A673 (cell line): ENCODE measurements at regions of chr1 and their contacts with region 1.

Region 1: DNA sequence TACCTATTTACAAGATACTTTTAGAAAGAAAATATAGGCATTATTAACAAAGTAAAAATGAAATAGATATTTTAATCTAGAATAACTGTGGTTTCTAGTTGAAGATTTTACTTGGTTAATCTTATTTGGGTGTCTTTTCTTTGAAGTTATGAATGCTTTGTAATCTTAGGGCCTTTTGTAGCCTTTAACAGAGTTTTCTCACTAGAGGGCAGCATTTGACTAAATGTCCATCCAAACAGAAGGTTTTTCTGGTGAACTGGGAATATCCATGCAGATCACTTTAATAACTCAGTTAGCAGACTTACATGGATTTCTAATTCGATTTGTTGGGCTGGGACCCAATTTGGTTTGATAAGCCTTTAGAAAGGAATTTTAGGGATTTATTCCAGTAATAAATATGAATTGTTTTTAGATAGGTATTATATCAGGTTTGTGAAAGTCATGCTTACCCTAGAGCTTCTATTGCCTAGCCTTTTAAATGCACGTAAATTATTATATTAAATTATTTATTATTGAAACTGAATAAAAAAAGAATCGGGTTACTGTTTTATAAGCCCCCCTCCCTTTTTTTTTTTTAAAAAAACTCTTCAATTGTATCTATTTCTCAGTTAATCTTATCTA is 119.7 kb downstream of the ZNF326 start:
- DNase-seq: peak; percentile 90
- H3K4me3 ChIP-seq: no peak overlapping the region
- H3K27ac ChIP-seq: no peak overlapping the region
- H3K4me1 ChIP-seq: peaks cover 26% of the 10 kb centered on the region
- H3K27me3 ChIP-seq: no peaks in the 10 kb centered on the region
- CTCF ChIP-seq: peak; percentile 86

Region 2: GRCh38 chr1:90714521-90714951 is 599.9 kb after region 1 on chr1:
- CTCF ChIA-PET with region 1: no interaction called
- POLR2A ChIA-PET with region 1: interaction called, 12 read pairs
- intact Hi-C with region 1: loop called (anchors 1 kb)
- DNase-seq: peak; percentile 48
- H3K4me3 ChIP-seq: peak overlapping the region; percentile 75
- H3K27ac ChIP-seq: peak overlapping the region; percentile 91
- H3K4me1 ChIP-seq: peaks cover 23% of the 10 kb centered on the region
- H3K27me3 ChIP-seq: no peaks in the 10 kb centered on the region
- CTCF ChIP-seq: no peak

Region 3: DNA sequence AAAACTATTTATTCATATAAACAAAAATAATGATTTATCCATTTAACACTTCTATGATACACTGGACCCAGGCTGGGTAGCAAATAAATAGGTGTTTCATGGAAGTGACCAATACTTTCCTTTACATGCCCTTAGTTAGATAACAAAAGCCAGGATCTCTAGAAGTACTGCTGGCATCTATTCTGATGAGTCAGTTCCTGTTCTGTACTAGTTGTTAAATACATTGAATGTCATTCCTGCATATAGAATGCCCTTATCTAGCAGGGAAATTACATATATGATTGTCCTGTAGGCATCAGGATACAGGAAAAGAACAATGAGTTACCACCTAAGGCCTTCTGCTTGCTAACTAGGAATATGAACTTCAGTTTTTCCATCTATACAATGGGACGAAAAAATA is 1159.2 kb after region 1 on chr1:
- CTCF ChIA-PET with region 1: no interaction called
- POLR2A ChIA-PET with region 1: no interaction called
- intact Hi-C with region 1: loop called (anchors 5 kb)
- DNase-seq: peak; percentile 4
- H3K4me3 ChIP-seq: no peak overlapping the region
- H3K27ac ChIP-seq: no peak overlapping the region
- H3K4me1 ChIP-seq: no peaks in the 10 kb centered on the region
- H3K27me3 ChIP-seq: no peaks in the 10 kb centered on the region
- CTCF ChIP-seq: no peak